Activated naive CD4-positive, alpha-beta T cell treated with anti-CD3 and anti-CD28 coated beads for 36 hours (primary cell): ENCODE measurements at regions of chr3 and their contacts with region 1.

Region 1: DNA sequence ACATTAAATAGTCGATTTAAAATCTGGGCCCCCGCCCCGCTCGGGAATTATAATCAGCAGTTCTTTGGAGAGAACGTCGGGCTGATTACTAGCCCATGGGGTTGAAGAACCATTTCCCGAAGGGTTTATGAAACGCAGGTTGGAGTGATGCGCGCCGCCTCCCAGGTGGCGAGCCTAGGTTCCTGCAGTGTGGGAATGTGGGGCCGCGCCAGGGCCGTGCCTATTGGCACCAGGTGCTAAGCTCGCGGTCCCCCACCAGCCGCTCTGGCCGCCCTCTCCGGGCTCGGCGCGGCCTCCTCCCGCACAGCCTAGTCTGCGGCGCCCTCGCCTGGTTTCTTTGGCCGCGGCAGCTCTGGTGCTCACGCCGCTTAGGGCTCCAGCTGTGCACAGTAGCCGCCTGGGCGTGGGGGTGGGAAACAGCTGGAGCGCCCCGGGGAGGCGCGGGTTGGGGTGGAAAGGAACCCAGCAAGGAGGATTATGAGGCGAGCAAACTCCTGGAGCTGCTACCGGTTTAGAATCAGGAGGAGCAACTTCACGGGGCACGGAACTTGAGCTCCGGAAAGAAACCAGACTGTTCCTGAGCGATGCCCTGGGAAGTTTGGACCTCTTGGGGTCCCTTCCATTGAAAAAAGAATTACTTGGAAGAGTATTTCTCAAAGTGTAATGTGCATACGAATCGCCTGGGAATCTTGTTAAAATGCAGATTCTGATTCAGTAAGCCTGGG is 5.6 kb upstream of the MECOM start:
- DNase-seq: peak; percentile 71
- H3K4me3 Mint-ChIP-seq: peak overlapping the region; percentile 57
- H3K27ac Mint-ChIP-seq: no peak overlapping the region
- H3K4me1 Mint-ChIP-seq: peaks cover 11% of the 10 kb centered on the region
- H3K27me3 Mint-ChIP-seq: peaks cover 82% of the 10 kb centered on the region

Region 2: DNA sequence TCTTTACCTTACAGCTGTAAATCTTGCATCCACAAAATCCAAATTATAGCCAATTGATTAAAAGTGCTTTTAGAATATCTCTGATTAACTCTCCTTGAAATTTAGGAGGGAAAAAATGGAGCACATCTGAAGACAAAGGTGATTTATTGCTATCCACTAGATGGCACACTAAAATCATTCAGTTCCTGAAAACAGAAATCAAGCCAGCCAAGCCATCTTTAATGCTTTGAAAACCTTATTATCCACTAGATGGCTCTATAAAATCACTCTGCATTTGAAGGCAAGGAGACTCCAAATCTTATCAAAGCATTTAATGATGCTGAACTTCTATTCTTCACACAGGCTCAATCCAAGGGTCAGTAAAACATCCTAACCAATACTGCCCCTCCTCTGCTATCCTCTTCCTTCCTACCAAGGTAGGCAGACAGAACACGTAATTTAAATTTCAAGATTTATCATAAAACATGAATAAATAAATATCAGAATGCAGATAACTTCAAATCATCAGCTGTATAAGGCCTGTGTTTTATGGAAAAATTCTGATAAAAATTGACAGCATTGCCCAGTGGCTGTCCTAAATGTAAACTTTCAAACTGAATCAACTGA is 1621.8 kb before region 1 on chr3:
- CTCF ChIA-PET with region 1: no interaction called
- intact Hi-C with region 1: loop called (anchors 2 kb)
- DNase-seq: no peak
- H3K4me3 Mint-ChIP-seq: no peak overlapping the region
- H3K27ac Mint-ChIP-seq: no peak overlapping the region
- H3K4me1 Mint-ChIP-seq: no peaks in the 10 kb centered on the region
- H3K27me3 Mint-ChIP-seq: peaks cover 9% of the 10 kb centered on the region

Region 3: GRCh38 chr3:168865022-168865551 is 804.0 kb before region 1 on chr3:
- CTCF ChIA-PET with region 1: no interaction called
- intact Hi-C with region 1: loop called (anchors 2 kb)
- DNase-seq: no peak
- H3K4me3 Mint-ChIP-seq: no peak overlapping the region
- H3K27ac Mint-ChIP-seq: no peak overlapping the region
- H3K4me1 Mint-ChIP-seq: no peaks in the 10 kb centered on the region
- H3K27me3 Mint-ChIP-seq: no peaks in the 10 kb centered on the region

Region 4: GRCh38 chr3:169149349-169149890 is 519.7 kb before region 1 on chr3:
- CTCF ChIA-PET with region 1: interaction called, 22 read pairs
- intact Hi-C with region 1: loop called (anchors 1 kb)
- DNase-seq: peak; percentile 82
- H3K4me3 Mint-ChIP-seq: peak overlapping the region; percentile 65
- H3K27ac Mint-ChIP-seq: no peak overlapping the region
- H3K4me1 Mint-ChIP-seq: peaks cover 20% of the 10 kb centered on the region
- H3K27me3 Mint-ChIP-seq: peaks cover 63% of the 10 kb centered on the region

Region 5: GRCh38 chr3:169305460-169305859 is 363.7 kb before region 1 on chr3:
- CTCF ChIA-PET with region 1: no interaction called
- intact Hi-C with region 1: no loop called
- DNase-seq: no peak
- H3K4me3 Mint-ChIP-seq: no peak overlapping the region
- H3K27ac Mint-ChIP-seq: no peak overlapping the region
- H3K4me1 Mint-ChIP-seq: no peaks in the 10 kb centered on the region
- H3K27me3 Mint-ChIP-seq: peaks cover 3% of the 10 kb centered on the region

Region 6: GRCh38 chr3:169610888-169611291 is 58.2 kb before region 1 on chr3:
- CTCF ChIA-PET with region 1: no interaction called
- intact Hi-C with region 1: no loop called
- DNase-seq: no peak
- H3K4me3 Mint-ChIP-seq: no peak overlapping the region
- H3K27ac Mint-ChIP-seq: no peak overlapping the region
- H3K4me1 Mint-ChIP-seq: no peaks in the 10 kb centered on the region
- H3K27me3 Mint-ChIP-seq: peaks cover 4% of the 10 kb centered on the region

Region 7: DNA sequence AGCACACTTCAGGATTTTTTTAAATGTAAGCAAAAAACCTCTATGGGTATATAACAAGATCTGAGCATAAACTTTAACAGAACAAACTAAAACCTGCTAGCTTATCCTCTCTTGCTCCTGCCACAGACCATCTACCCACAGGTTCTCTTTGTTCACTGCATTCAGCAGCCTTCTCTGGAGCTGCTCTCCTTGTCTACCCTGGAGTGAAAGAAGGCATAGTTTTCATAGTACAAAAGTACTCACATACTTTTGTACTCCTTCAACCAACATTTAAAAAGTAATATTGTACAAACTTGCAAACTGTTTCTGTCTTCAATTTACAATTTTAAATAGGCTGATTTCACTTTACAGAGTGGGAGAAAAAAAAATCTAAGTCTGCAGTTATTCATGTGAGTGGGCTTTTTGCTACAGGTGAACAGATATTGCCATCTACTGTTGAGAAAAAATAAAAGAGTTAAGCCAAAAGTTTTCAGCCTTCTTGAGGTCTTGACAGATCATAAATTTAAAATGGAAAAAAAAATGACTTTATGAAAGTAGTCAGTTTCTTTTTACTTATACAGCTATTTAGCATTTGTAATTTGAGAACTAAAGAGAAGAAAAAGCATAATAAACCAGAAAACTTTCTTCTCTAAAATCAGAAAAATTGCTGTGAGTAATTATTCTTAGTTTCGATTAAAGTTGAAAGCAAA is 75.4 kb after region 1 on chr3:
- CTCF ChIA-PET with region 1: interaction called, 7 read pairs
- intact Hi-C with region 1: loop called (anchors 5 kb)
- DNase-seq: no peak
- H3K4me3 Mint-ChIP-seq: no peak overlapping the region
- H3K27ac Mint-ChIP-seq: no peak overlapping the region
- H3K4me1 Mint-ChIP-seq: peaks cover 14% of the 10 kb centered on the region
- H3K27me3 Mint-ChIP-seq: peaks cover 16% of the 10 kb centered on the region